ENCODE measurements at regions of chr6 and their contacts with region 1.

Region 1: GRCh38 chr6:51387907-51388306 is 569.2 kb downstream of the TFAP2B start:
- DNase-seq: no peak
- ATAC-seq: no peak

Region 2: GRCh38 chr6:51184046-51184445 is 203.9 kb before region 1 on chr6:
- intact Hi-C with region 1: no loop called
- DNase-seq: no peak
- ATAC-seq: no peak

Region 3: DNA sequence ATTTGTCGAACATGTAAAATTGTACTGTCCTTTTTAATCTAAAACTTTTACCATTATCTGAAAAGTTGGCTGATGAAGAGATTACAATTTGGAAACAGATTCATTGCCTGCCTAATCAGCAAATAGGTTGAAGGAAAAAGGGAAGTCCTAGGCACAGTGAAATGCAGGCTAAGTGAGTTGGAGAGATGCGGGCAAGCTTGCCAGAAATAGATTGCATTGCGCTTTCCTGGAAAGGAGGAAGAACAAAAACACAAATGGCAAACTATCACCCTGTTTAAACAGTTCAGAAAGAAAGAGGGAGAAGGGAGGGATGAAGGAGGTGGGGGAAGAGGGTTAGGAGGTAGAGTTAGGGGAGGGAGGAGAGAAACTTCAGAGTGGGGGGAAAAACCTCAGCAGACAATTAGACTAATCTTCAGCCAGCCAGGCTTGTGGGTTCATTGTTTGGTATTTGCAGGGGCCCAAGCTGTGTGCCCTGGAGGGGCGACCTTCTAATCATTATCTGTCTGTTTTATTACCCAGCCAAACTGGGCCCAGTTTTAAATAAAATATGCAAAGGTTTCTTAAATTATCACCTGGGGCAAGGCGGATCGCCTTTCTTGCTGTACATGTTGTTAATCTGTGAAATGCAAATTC is 104.1 kb before region 1 on chr6:
- intact Hi-C with region 1: no loop called
- DNase-seq: no peak
- ATAC-seq: no peak

Region 4: DNA sequence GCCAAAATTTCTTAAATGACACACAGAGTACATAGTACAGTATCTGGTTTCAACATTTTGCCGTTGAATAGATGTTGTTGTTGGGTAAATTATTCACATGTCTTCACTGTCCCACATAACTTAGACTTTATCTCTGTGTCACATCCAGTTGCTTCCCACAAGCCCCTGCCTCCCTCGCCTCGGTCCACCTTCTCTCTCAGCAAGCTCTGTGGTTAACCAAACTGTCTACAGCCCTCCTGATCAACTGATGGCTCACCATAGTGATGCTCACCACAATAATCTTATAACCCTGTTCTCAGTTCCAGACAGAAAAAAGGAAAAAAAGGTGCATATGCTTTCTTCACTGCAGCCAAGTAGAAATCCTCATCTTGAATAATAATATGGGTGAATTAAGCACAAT is 833.4 kb after region 1 on chr6:
- intact Hi-C with region 1: loop called (anchors 5 kb)
- DNase-seq: no peak
- ATAC-seq: no peak

Region 5: DNA sequence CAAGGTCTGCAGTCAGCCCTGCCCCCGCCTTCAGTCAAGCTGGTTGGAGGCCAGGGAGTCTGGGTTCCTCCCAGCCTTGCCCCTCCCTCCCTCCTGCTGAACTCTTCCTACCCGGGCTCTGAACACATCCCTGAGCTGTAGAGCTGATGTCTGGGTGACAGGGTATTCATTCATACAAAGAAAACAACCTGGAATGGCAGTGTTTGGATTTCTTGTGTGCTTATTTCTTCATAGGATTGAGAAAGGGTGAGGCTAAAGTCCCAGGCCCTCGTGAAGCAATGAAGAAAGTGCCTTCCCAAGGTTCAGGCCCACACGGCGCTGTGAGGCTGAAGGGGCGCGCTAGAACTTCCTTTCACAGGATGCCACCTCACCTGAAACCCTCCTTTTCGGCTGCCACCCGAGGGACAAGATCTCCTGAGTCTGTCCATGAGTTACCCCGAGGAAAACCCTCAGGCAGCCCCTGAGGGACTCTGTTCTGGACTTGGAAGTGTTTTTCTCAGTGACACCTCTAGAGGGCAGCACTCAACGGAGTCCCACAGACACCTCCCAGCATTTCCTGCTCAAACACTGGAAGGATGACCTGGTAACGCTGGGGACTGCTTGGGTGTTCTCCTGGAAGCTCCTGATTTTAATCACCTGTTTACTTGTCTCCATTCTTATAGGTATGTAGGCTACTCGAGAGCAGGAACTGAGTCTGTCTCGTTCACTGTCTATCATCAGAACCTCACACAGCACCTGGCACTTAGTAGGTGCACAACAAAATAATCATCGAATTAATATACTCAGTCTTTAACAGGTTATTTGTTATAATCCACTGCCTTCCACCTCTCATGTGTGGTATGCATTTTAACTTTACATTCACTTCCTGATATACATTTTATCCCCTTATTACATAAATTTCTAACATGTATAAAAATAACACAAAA is 1427.5 kb after region 1 on chr6:
- intact Hi-C with region 1: no loop called
- DNase-seq: no peak
- ATAC-seq: peak; percentile 74

Region 6: GRCh38 chr6:52887910-52888535 is 1500.1 kb after region 1 on chr6:
- intact Hi-C with region 1: no loop called
- DNase-seq: no peak
- ATAC-seq: no peak

Measured in sciatic nerve (tissue), 2 donors.